HepG2 (cell line): ENCODE measurements at regions of chr13 and their contacts with region 1.

Region 1: DNA sequence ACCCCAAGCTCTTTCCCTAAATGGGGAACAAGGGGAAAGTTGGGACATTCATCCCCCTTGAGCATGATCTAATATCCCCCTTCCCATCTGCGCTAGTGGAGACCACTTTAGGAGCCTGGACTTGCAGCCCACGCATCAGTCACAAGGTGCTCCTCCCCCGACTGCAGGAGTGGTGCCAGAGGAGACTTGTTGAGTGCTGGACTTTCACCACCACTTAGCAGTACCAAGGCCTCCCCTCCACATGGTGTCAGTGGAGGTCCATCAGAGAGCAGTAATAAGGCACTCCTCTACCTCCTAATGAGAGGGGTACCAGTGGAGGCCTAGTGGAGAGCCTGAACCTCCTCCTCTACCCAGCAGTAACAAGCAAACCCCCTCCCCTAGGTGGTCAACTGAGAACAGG is 22.5 kb downstream of the CAB39L start:
- DNase-seq: peak; percentile 81
- ATAC-seq: peak; percentile 100
- H3K4me3 ChIP-seq: no peak overlapping the region
- H3K27ac ChIP-seq: no peak overlapping the region
- H3K4me1 ChIP-seq: peaks cover 28% of the 10 kb centered on the region
- H3K27me3 ChIP-seq: no peaks in the 10 kb centered on the region
- CTCF ChIP-seq: peak; percentile 97
- EP300 ChIP-seq: no peak
- POLR2A ChIP-seq: no peak
- RAD21 ChIP-seq: peak; percentile 93

Region 2: DNA sequence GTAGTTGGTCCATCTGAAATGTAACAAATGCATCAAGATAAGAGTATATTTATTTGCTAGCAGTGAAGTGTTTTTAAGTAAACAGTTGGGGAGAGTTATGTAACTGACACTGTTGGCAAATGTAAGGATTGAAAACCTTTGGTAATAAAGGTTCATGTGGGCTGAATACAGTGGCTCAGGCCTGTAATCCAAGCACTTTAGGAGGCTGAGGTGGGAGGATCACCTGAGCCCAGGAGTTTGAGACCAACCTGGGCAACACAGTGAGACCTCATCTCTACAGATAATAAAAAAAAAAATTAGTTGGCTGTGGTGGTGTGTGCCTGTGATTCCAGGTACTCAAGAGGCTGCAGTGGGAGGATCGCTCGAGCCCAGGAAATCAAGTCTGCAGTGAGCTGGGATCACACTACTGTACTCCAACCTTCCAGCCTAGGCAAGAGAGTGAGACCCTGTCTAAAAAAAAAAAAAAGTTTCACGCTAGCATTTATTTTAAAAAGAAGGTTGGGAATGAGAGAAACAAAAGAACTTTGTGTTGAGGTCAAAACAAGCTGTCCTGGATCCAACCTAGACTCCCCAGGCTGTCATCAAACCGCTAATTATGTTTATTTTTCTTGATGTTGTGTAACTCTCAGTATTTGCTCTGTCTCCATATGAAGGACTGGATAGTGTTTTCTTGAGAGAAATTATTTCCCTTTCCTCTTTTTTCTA is 43.4 kb after region 1 on chr13:
- CTCF ChIA-PET with region 1: no interaction called
- POLR2A ChIA-PET with region 1: no interaction called
- in situ Hi-C with region 1: no loop called
- intact Hi-C with region 1: loop called (anchors 1 kb)
- DNase-seq: peak; percentile 92
- ATAC-seq: peak; percentile 85
- H3K4me3 ChIP-seq: peak overlapping the region in 2 of 3 experiments; percentile 8 to 22; a peak in 2 of 6 replicates
- H3K27ac ChIP-seq: peak overlapping the region; percentile 96
- H3K4me1 ChIP-seq: peaks cover 40% of the 10 kb centered on the region
- H3K27me3 ChIP-seq: no peaks in the 10 kb centered on the region
- CTCF ChIP-seq: no peak
- EP300 ChIP-seq: peak in 1 of 2 experiments; percentile 85; a peak in 2 of 4 replicates
- POLR2A ChIP-seq: no peak
- RAD21 ChIP-seq: no peak

Region 3: GRCh38 chr13:49517461-49517860 is 96.1 kb after region 1 on chr13:
- CTCF ChIA-PET with region 1: interaction called, 18 read pairs
- POLR2A ChIA-PET with region 1: no interaction called
- in situ Hi-C with region 1: no loop called
- intact Hi-C with region 1: loop called (anchors 1 kb)
- DNase-seq: peak; percentile 26
- ATAC-seq: peak; percentile 80
- H3K4me3 ChIP-seq: no peak overlapping the region
- H3K27ac ChIP-seq: no peak overlapping the region
- H3K4me1 ChIP-seq: peaks cover 10% of the 10 kb centered on the region
- H3K27me3 ChIP-seq: no peaks in the 10 kb centered on the region
- CTCF ChIP-seq: peak; percentile 34
- EP300 ChIP-seq: no peak
- POLR2A ChIP-seq: no peak
- RAD21 ChIP-seq: peak; percentile 18; the same call in 1 of the 2 replicates

Region 4: DNA sequence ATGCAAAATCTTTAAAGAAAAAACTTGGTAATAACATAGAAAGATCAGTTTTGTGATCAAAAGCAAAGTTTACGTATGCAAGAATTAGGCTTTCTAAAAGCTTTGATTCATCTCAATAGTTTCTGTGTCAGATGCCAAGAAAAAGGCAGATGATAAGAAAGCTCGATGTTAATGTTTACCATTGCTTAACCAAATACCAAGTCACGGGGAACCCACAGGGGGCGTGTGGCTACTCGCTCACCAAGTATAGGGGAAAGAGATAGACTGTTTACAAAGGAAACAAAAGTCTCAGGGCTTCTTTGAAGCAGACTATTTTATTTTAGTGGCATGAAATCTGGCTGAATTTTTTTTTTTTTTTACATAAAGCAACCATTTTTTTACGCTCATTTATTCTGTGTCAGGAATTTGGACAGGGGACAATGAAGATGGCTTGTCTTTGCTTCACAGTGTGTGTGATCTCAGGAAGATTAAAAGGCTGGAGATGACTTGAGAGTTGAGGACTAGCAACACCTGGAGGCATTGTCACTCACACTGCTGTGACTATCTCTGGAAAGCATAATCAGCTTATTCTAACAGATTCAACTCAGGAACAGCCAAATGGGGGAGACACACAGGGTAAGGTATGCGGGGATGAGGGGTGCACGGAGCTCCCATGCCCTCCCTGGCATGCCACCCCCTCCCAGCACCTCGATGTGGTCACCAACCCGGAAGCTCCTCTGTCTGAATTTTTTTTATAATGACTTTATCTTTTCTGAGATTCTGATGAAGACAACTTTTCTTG is 139.1 kb after region 1 on chr13:
- CTCF ChIA-PET with region 1: no interaction called
- POLR2A ChIA-PET with region 1: no interaction called
- in situ Hi-C with region 1: no loop called
- intact Hi-C with region 1: no loop called
- DNase-seq: peak; percentile 68
- ATAC-seq: peak; percentile 97
- H3K4me3 ChIP-seq: no peak overlapping the region
- H3K27ac ChIP-seq: peak overlapping the region; percentile 32
- H3K4me1 ChIP-seq: peaks cover 18% of the 10 kb centered on the region
- H3K27me3 ChIP-seq: no peaks in the 10 kb centered on the region
- CTCF ChIP-seq: peak; percentile 56
- EP300 ChIP-seq: peak in 1 of 2 experiments; percentile 37; a peak in 1 of 4 replicates
- POLR2A ChIP-seq: no peak
- RAD21 ChIP-seq: no peak

Region 5: GRCh38 chr13:49606747-49607648 is 185.6 kb after region 1 on chr13:
- CTCF ChIA-PET with region 1: interaction called, 29 read pairs
- POLR2A ChIA-PET with region 1: no interaction called
- in situ Hi-C with region 1: loop called (anchors 5 kb)
- intact Hi-C with region 1: loop called (anchors 1 kb)
- DNase-seq: peak; percentile 77
- ATAC-seq: peak; percentile 96
- H3K4me3 ChIP-seq: peak overlapping the region; percentile 31 to 67 (median 62); a peak in 5 of 6 replicates
- H3K27ac ChIP-seq: no peak overlapping the region
- H3K4me1 ChIP-seq: peaks cover 32% of the 10 kb centered on the region
- H3K27me3 ChIP-seq: no peaks in the 10 kb centered on the region
- CTCF ChIP-seq: peak; percentile 91
- EP300 ChIP-seq: no peak
- POLR2A ChIP-seq: no peak
- RAD21 ChIP-seq: peak; percentile 88